SK-N-SH (cell line): ENCODE measurements at regions of chr2 and their contacts with region 1.

Region 1: GRCh38 chr2:224369028-224369632 is 32.8 kb downstream of the FAM124B start:
- DNase-seq: peak; percentile 49
- H3K4me3 ChIP-seq: no peak overlapping the region
- H3K27ac ChIP-seq: no peak overlapping the region
- H3K4me1 ChIP-seq: no peaks in the 10 kb centered on the region; a peak in 1 of 4 replicates
- H3K27me3 ChIP-seq: no peaks in the 10 kb centered on the region
- CTCF ChIP-seq: peak; percentile 82
- EP300 ChIP-seq: no peak
- RAD21 ChIP-seq: peak; percentile 60

Region 2: DNA sequence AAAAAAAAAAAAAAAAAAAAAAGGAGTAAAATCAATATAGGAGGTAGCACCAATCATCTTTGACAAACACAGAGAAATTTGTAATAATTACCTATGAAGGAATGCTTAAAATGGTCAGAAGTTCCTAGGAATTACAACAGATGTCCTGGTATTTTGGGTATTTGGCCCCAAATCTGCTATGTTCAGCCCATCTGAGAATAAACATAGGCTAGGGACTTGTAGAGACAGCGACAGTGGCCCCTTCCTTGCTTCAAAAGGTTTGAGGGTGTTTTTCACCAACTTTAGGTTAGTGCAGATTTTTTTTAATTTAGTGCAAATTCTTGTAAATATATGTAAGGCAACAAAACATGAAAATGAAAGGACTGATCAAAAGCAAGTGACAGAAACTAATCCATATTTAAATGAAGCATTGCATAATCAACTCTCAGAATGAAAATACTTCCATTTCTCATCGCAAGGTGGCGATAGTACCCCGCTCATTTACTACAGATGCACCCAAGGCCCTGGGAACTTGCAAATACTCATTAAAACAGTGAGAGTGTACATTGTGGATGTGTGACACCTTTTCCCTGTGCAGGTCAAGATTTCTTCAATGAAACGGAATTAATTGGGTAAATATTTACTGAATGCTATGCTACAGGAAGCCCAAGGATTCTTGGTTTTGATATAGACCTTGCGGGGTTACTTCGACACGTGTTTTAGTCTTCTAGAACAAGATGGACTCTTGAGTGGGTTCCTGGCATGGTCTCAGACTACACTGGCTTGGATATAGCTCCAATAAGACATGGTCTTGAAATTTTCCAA is 11.8 kb before region 1 on chr2:
- CTCF ChIA-PET with region 1: interaction called, 14 read pairs
- POLR2A ChIA-PET with region 1: no interaction called
- DNase-seq: peak; percentile 68
- H3K4me3 ChIP-seq: peak overlapping the region in 1 of 2 experiments; percentile 31; a peak in 1 of 4 replicates
- H3K27ac ChIP-seq: no peak overlapping the region
- H3K4me1 ChIP-seq: peaks cover 0 to 2% of the 10 kb centered on the region in 2 experiments; a peak in 1 of 4 replicates
- H3K27me3 ChIP-seq: no peaks in the 10 kb centered on the region; the same call in 1 of the 2 replicates
- CTCF ChIP-seq: peak; percentile 85
- EP300 ChIP-seq: no peak
- RAD21 ChIP-seq: peak; percentile 96

Region 3: DNA sequence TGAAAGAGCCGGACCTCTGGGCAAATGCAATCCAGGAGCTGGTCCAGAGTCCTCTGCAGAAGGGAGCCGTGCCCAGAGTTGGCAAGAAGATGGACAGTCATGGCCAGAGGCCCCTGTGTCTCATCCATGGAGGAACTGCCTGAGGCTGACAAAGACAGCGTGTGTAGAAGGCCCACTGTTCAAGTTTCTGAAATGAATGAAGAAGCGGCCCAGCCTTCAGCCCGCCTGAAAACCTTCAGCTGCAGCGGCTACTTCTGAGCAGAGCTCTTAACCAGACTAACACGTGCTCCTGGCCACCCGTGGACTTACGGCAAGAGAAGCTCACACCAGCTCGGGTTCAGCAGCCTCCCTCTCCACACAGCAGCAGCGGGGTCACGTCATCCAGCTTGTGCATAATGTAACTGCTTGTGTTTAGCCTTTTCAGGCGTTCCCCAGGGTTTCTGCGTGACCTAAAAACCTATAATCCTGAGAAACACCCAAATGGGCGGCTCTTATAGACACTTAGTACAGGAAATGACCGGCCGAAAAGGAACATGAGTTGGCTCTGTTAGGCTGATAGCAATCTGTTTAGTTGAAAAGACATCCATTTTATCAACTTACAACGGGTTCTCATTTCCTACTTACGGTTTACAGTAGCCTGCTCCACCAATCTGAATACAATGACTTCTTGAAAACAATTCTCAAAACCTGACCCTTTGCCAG is 32.7 kb after region 1 on chr2 and contains the start of gene FAM124B:
- CTCF ChIA-PET with region 1: interaction called, 11 read pairs
- POLR2A ChIA-PET with region 1: no interaction called
- DNase-seq: no peak
- H3K4me3 ChIP-seq: no peak within 1 kb of the TSS
- H3K27ac ChIP-seq: no peak within 1 kb of the TSS; a peak in 2 of 4 replicates
- H3K4me1 ChIP-seq: peaks cover 0 to 5% of the 10 kb centered on the region in 2 experiments; a peak in 1 of 4 replicates
- H3K27me3 ChIP-seq: no peaks in the 10 kb centered on the region
- CTCF ChIP-seq: no peak
- EP300 ChIP-seq: no peak
- RAD21 ChIP-seq: no peak
- polyA plus RNA-seq, gene FAM124B: 0.03 TPM in 1 of 2 replicates, not detected in the other

Region 4: DNA sequence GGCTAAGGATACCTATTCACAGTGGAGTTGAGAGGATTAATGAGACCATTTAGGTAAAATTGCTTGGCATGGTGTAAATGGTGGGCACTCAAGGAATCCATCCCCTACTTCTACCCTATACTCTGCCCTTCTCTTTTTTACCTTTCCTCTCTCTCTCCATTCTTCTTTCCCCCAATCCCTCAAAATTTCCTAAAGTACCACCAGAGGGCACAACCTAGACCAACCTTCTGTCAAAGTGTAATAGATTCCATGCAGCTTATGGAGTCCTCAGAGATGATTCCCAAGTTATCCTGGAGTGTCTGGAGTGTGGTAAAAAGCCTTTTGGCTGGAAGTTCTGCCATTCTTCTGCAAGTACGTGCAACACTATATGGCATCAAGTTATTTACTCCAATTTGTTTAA is 380.0 kb after region 1 on chr2:
- CTCF ChIA-PET with region 1: no interaction called
- POLR2A ChIA-PET with region 1: no interaction called
- DNase-seq: no peak
- H3K4me3 ChIP-seq: no peak overlapping the region
- H3K27ac ChIP-seq: no peak overlapping the region
- H3K4me1 ChIP-seq: no peaks in the 10 kb centered on the region
- H3K27me3 ChIP-seq: no peaks in the 10 kb centered on the region
- CTCF ChIP-seq: peak; percentile 34
- EP300 ChIP-seq: no peak
- RAD21 ChIP-seq: no peak